Transverse colon (tissue), 4 donors: ENCODE measurements at regions of chr16 and their contacts with region 1.

Region 1: DNA sequence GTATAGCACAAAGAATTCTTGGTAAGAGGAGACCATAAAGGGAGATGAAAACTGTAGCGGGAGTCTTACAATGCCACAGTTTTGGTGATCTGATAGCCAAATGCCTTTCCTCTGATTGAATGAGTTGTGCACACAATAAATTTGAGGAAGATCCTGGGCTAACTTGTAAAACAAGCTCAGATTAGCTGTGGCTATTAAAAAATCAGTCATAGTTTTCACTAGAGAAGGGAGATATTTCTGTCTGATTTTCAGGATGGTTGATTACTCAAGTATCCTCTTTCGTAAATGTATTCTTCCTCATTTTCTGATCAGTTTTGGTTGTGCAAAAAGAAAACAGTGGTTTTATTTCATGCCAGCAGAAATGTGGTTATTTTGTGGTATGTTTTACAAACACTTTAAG is 9.1 kb upstream of the METTL9 start:
- DNase-seq: no peak
- H3K4me3 ChIP-seq: no peak overlapping the region
- H3K27ac ChIP-seq: no peak overlapping the region
- H3K4me1 ChIP-seq: no peaks in the 10 kb centered on the region
- H3K27me3 ChIP-seq: no peaks in the 10 kb centered on the region
- CTCF ChIP-seq: no peak
- EP300 ChIP-seq: no peak
- POLR2A ChIP-seq: no peak

Region 2: DNA sequence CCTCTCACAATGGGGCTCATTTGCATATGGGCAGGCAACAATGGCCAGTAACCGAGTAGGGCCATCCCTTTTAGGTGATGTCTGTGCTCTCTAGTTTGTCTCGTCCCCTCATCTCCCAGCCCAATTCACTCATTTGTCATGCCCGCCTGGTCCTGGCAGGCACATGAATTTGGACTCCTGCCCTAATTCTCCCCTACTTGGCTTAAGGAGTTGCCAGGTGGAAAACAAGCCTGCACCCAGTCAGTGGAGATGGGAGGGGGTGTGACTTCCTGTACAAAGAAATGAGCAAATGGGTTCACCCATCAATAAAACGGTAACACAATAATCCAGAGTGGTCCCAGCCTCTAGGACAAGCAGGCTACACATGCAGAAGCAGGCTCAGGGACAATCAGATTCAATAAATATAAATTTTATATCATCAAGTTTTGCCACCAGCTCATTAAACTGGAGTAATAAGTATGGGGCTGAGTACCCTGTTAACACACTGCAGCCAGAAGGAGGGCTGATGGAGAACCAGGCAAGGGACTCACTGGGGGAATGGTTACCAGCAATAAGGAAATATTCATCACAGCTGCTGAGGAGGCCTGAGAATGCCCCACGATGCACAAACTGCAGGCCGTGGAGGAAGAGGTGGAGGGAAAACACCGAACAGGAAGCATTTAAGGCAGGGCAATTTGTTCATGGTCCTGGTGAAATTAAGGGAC is 1621.2 kb before region 1 on chr16:
- in situ Hi-C with region 1: no loop called
- intact Hi-C with region 1: no loop called
- DNase-seq: peak; percentile 29
- H3K4me3 ChIP-seq: no peak overlapping the region
- H3K27ac ChIP-seq: no peak overlapping the region
- H3K4me1 ChIP-seq: no peaks in the 10 kb centered on the region
- H3K27me3 ChIP-seq: peaks cover 8% of the 10 kb centered on the region
- CTCF ChIP-seq: no peak
- EP300 ChIP-seq: no peak
- POLR2A ChIP-seq: no peak

Region 3: GRCh38 chr16:21638573-21638975 is 48.3 kb after region 1 on chr16:
- in situ Hi-C with region 1: loop called in 3 of 4 experiments (anchors 5 to 10 kb)
- intact Hi-C with region 1: loop called (anchors 10 kb)
- DNase-seq: no peak
- H3K4me3 ChIP-seq: no peak overlapping the region
- H3K27ac ChIP-seq: no peak overlapping the region
- H3K4me1 ChIP-seq: no peaks in the 10 kb centered on the region
- H3K27me3 ChIP-seq: no peaks in the 10 kb centered on the region
- CTCF ChIP-seq: no peak
- EP300 ChIP-seq: no peak
- POLR2A ChIP-seq: no peak

Region 4: DNA sequence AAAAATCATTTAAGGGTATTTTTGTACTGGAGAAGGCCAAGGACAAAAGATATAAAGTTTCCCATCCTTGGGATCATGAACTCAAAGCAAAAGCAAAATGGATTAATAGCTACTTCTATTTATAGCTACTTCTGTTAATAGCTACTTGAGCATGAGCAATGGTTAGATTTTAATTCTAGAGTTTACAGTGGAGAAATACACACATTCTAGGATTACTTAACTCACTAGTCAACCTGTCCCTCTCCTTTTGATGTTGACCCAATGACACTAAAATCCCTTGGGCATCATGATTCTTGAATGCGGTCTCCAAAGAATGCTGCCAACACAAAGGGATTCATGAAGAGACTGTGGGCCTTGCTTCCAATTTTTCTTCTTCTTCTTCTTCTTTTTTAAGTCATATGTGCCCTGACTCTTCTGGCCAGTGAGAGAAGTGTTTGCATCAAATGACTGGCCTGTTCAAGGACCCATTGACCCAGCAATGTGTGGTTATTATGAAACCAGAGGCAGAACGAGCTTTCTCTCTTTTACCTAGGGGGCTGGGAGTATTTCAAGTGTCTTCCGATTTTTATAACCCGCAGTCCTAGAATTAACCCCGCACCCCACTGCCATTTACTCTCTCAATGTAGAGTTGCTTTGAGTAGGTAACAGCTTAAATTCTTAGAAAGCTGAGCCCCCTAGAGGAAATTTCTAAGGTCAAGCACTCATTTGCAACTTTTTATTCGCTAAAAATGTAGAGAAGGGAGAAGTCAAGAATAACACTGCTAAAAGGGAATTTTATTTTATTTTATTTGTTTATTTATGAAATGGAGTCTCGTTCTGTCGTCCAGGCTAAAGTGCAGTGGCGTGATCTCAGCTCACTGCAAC is 108.1 kb after region 1 on chr16:
- in situ Hi-C with region 1: loop called in 2 of 4 experiments (anchors 25 kb)
- intact Hi-C with region 1: loop called (anchors 5 kb)
- DNase-seq: no peak
- H3K4me3 ChIP-seq: no peak overlapping the region
- H3K27ac ChIP-seq: no peak overlapping the region
- H3K4me1 ChIP-seq: no peaks in the 10 kb centered on the region
- H3K27me3 ChIP-seq: no peaks in the 10 kb centered on the region
- CTCF ChIP-seq: no peak
- EP300 ChIP-seq: no peak
- POLR2A ChIP-seq: no peak